ENCODE measurements at regions of chr1 and their contacts with region 1.

Region 1: DNA sequence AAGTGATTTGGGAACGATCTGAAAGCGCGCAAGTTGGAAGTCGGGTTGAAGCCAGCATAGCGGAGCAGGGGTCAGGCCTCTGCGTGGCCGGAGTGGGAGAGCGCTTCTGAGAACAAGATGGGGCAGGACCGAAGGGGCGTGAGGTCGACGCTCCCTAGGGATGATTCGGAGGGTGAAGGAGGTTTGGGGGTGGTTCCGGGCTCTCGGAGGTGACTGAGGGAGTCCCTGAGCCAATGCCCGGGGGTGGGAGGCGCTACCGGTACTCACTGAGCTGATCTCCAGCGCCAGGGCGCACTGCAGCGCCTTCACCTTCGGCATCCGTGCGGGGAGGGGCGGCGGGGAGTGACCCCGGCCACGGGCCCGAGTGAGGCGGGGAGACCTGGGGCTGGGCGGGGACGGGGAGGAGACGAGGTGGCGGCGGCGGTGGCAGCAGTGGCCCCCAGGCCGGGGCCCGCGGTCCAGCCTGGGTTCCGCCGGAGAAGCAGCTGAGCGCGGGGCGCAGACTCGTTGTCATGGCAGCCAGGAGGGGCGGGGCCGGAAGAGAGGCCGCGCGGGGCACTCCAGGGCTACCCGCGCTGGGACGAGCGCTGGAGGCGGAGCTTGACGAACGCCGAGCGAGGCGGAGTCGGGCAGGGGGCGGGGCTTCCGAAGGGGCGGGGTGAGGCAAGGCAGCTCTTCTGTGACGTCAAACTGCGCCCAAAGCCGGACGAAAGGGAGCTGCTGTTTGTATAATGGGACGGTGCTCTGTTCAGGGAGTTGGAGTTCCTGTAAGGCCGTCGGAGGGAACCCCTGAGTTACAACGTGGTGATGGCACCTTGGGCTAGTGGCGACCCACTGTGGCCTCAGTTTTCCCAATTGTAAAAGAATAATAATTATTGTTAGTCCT is at the start of gene SPATA6:
- DNase-seq: peak; percentile 98 to 100 (median 99)
- H3K4me3 ChIP-seq: peak within 1 kb of the TSS; percentile 79
- H3K27ac ChIP-seq: peak within 1 kb of the TSS; percentile 90 to 91
- H3K4me1 ChIP-seq: no peaks in the 10 kb centered on the region
- H3K27me3 ChIP-seq: no peaks in the 10 kb centered on the region
- CTCF ChIP-seq: no peak
- EP300 ChIP-seq: no peak
- POLR2A ChIP-seq: peak; percentile 67
- total RNA-seq, gene SPATA6: 18.5 to 48.3 (median 36.3) TPM

Region 2: DNA sequence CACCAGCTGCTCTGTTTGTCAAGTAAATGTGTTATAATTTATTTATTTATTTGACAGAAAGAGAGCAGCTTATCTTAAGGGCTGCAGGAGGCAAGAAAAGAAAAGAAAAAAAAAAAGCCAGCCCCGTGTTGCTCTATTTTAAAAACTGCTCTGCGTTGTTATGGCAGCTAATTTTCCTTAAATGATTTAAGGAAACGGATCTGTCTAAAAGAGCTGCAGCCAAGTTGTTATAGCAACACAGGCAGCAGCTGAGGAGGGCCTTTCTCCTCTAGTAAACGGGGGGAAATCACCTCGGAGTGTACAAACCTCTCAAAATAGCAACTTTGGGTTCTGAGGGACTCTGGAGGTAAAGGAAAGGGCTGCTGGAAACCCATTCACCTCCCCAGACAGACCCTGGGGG is 155.6 kb after region 1 on chr1:
- intact Hi-C with region 1: no loop called
- DNase-seq: no peak
- H3K4me3 ChIP-seq: no peak overlapping the region
- H3K27ac ChIP-seq: no peak overlapping the region
- H3K4me1 ChIP-seq: no peaks in the 10 kb centered on the region
- H3K27me3 ChIP-seq: no peaks in the 10 kb centered on the region
- CTCF ChIP-seq: no peak
- EP300 ChIP-seq: no peak
- POLR2A ChIP-seq: no peak

Region 3: DNA sequence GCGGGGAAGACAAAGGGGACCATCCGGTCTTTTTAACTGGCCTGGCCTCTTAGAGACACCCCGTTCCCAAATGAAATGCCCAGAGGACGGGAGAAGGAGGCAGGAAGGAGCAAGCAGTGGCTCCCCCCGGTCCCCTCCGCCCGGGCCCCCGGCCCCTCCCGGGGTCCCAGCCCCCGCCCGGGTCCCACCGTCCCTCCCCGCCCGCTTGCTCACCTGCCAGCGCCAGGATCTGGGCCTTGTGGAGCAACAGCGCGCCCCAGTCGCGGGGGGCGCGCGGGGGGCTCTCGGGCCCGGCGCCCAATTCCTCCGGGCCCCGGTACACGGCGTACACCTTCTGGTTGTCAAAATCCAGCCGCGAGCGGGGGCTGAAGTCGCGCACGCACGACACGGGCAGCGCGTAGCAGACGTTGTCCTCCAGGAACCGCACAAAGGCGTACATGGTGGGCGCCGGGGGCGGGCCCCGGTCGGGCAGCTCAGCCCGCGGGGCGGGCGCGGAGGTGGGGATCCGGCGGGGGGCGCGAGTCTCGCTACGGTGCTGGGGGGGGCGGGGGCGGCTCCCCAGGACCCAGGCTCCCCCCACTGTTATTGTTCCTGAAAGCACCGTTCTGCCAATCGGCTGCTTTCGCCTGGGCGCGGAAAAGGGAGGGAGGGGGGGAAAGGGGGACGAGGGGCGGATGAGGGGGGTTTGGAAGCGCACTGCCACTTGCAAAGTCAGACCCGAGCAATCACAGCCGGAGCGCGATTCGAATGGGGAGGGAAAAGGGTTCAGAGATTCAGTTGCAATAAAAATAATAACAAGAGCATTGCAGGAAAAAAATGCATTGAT is 304.7 kb after region 1 on chr1 and contains the start of gene BEND5:
- intact Hi-C with region 1: loop called in 1 of 4 experiments (anchors 10 kb)
- DNase-seq: peak; percentile 60 to 76 (median 71)
- H3K4me3 ChIP-seq: peak within 1 kb of the TSS; percentile 79
- H3K27ac ChIP-seq: peak within 1 kb of the TSS; percentile 84 to 92
- H3K4me1 ChIP-seq: peaks cover 9% of the 10 kb centered on the region
- H3K27me3 ChIP-seq: no peaks in the 10 kb centered on the region
- CTCF ChIP-seq: no peak
- EP300 ChIP-seq: no peak
- POLR2A ChIP-seq: no peak
- total RNA-seq, gene BEND5: 8.2 to 21.0 (median 12.3) TPM